ENCODE measurements at regions of chr3 and their contacts with region 1.

Region 1: GRCh38 chr3:42961633-42962032 is 17.5 kb upstream of the GASK1A start:
- DNase-seq: peak in 30 of 42 donors; percentile 13 to 77 (median 51)

Region 2: DNA sequence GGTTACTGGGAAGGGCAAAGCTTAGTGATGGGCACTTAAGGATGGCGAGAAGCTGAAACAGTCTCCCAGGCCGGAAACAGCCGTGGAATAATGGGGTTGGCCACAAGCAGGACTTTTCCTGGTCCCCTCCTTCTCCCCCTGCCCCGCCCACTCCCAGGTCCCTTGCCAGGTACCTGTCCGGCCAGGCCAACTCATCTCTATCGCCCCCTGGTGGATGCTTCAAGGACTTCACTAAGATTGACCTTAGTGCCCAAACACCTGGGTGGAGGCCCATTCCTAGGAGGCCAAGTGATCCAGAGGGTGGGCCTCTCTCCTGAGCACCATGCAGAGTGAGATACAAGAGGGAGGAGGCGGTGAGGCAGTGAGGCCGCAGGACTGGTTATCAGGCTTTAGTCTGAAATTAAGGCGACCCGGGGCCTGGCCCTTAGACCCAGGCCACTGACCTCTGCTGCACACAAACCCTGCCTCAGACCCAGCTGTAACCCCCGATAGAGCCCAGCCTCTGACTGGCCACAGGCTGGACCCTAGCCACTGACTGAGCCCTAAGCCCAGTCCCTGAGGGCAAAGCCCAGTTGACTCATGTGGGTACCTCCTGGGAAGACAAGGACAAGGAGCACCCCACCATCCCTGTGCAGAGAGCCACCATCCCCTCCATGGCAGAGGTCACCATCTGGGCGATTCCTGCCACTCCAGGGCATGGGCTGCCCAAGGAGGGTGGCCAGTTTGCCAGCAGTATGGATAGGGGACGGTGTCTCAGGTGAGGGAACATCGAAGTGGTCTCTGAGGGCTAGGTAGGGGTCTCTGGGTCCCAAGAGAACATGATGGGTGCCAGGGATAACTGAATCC is 421.5 kb before region 1 on chr3:
- intact Hi-C with region 1: no loop called
- DNase-seq: peak in 26 of 42 donors; percentile 16 to 78 (median 45)

Region 3: GRCh38 chr3:43155464-43156121 is 194.0 kb after region 1 on chr3:
- intact Hi-C with region 1: loop called (anchors 10 kb)
- DNase-seq: peak in 39 of 42 donors; percentile 20 to 76 (median 53)

Region 4: DNA sequence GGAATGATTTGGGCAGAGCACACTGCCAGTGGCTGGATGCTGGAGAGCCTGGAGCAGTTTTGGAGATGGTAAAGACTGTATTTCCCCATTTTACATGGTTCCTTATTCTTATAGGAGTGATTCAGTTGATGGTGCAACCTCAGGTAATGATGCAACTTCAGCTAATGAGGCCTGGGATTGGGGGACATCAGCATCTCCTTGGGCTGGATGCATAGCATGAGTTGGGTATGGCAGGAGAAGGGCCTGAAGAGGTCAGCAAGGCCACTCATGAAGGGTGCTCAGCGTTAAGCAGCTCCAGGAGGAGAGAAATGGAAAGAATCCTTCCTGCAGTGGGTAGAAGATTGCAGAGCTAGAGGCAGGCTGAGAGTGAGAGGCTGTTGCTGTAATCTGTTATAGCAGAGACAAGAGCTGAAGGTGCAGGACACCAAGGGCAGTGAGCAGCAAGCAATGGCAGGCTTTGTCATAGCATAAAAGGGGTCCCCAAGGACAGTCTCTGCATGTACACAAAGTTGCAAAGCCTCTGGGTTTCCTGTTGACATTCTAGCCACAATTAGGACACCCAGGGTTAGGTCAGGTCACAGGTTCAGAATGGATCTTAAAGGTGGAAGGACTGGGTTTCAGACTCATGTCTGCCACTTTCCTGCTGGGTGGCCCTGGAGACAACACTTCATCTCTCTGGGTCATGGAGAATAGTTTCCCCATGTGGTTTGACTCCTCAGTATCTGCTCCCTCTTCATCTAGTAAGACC is 295.3 kb after region 1 on chr3:
- intact Hi-C with region 1: loop called (anchors 10 kb)
- DNase-seq: no peak

Region 5: DNA sequence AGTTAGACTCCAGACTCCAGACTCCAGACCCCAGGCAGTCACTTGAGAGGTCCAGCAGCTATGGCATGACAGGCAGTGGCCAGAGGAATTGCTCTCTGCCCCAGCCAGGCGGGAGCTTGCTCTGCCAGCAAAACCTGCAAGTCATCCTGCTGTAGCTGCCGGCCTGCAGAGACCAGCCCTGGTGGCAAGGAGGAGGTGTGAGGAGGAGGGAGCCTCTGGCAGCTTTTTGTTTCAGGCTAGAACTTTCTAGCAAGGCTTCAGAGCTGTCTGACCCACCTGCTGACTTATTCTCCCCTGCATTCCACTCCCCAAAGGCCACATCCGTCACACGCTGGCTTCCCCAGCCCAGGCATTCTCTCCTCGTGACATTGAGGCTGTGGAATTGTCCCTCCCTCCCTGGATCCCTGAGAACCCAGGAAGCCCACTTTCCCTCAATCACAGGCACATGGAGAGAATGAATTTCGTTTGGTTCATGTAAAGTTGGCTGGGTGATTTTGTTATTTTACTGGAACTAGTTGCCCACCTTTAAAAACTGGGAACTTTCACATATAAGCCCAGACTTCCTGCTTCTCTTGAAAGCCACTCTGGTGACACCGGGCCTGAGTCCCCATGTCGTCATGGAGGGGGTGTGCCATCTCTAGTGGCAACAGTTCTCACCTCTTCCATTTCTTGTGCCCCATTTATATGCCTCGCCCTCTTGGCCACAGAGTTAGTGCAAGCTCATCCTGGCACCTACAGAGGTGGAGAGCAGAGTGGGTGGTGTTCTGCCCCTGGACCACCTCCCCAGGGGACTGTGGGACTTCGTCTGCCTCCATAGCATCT is 811.9 kb after region 1 on chr3:
- intact Hi-C with region 1: no loop called
- DNase-seq: peak in 13 of 42 donors; percentile 5 to 53 (median 26)